Right cardiac atrium (tissue), 5 donors: ENCODE measurements at regions of chr14 and their contacts with region 1.

Region 1: GRCh38 chr14:100383727-100384158 is 60.6 kb downstream of the SLC25A47 start:
- DNase-seq: peak; percentile 51 to 81 (median 76)
- ATAC-seq: peak; percentile 70 to 71
- H3K4me3 ChIP-seq: no peak overlapping the region
- H3K27ac ChIP-seq: no peak overlapping the region
- H3K4me1 ChIP-seq: peaks cover 2% of the 10 kb centered on the region
- H3K27me3 ChIP-seq: no peaks in the 10 kb centered on the region

Region 2: DNA sequence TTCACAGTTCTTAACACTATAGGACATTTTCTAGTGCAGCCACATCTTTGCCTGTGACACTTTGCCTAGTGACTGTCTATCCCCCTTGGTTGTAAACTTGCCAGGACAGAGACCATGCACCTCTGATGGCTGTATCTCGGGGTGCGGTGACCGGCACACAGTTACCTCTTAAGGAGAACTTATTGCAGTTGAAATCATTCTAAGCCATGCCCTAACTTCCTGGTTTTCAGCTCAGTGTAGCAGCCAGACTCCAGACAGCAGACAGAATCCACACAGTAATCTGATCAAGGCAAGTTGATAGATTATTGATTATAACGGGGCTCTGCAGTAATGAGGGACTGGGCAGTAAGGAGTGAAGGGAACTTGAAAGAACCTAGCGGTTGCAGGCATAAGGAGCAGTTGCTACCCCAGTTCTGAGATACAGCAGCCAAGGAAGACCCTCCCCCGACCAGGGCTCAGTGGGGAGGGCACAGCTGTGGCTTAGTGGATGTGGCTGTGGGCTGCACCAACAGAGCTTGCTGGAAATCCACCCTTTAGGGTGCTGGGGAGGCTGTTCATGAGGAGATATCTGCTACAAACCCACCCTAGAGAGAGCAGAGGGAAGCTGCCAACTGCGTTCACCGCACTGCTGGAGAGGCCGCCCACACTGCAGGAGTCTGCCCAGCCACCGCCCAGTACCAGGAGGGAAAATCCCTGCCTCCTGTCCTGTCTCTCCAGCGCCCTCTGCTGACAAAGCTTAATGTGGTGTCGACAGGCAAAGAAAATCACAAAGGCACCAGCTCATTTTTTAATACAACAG is 261.6 kb after region 1 on chr14:
- intact Hi-C with region 1: loop called (anchors 2 to 10 kb)
- DNase-seq: peak; percentile 87 to 94 (median 90)
- ATAC-seq: peak; percentile 89 to 91
- H3K4me3 ChIP-seq: no peak overlapping the region
- H3K27ac ChIP-seq: no peak overlapping the region
- H3K4me1 ChIP-seq: no peaks in the 10 kb centered on the region
- H3K27me3 ChIP-seq: no peaks in the 10 kb centered on the region

Region 3: GRCh38 chr14:100654814-100655740 is 271.3 kb after region 1 on chr14:
- intact Hi-C with region 1: loop called in 1 of 4 experiments (anchors 5 kb)
- DNase-seq: no peak
- ATAC-seq: peak; percentile 45 to 68
- H3K4me3 ChIP-seq: no peak overlapping the region
- H3K27ac ChIP-seq: no peak overlapping the region
- H3K4me1 ChIP-seq: no peaks in the 10 kb centered on the region
- H3K27me3 ChIP-seq: no peaks in the 10 kb centered on the region

Region 4: GRCh38 chr14:101634850-101635748 is 1251.4 kb after region 1 on chr14:
- intact Hi-C with region 1: loop called in 1 of 4 experiments (anchors 5 kb)
- DNase-seq: peak in 1 of 3 donors; percentile 46
- ATAC-seq: peak; percentile 26 to 29
- H3K4me3 ChIP-seq: no peak overlapping the region
- H3K27ac ChIP-seq: no peak overlapping the region
- H3K4me1 ChIP-seq: no peaks in the 10 kb centered on the region
- H3K27me3 ChIP-seq: no peaks in the 10 kb centered on the region